ENCODE measurements at regions of chr3 and their contacts with region 1.

Region 1: DNA sequence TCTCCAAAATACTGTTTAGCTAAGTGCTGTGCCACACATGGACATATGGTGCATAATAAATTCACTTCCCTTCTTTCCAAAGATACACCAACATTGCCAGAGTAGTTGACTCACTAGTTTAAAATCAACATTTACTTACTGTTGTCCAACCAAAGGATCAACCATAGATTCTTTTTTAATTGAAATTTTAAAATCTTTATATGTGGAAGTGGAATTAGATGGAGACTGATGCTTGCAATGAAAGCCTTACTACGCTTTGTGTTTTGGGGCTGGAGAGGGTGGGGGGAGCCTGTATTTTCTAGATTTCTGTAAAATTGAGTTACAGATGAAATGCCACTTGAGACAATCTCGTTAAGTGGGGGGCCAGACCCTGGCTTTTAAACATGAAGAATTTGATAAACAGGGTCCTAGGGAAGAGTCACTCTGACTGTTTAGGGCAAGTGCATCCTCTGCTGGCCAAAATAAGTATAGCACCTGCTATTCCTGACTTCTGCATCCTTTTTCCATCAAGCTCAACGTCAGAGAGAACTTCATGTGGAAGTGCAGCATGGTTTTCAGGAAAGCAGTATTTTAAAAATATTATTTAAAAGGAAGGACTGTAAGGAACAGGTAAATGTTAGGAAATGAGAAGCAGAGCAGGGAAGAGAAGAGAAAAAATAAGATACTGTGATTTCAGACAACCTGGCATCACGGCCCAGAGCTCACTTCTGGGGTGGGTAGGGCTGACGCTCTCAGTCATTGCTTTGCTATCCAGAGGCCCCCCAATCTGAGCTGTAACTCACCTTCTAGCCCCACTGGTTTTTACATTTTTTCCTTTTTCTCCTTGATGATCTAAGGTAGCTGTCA is 76.7 kb downstream of the BOC start:
- DNase-seq: no peak
- H3K4me3 ChIP-seq: no peak overlapping the region
- H3K27ac ChIP-seq: peak overlapping the region; percentile 47
- H3K4me1 ChIP-seq: peaks cover 12% of the 10 kb centered on the region
- H3K27me3 ChIP-seq: no peaks in the 10 kb centered on the region
- CTCF ChIP-seq: peak; percentile 95 to 99 (median 95)
- POLR2A ChIP-seq: no peak

Region 2: GRCh38 chr3:113051302-113051711 is 236.7 kb before region 1 on chr3:
- intact Hi-C with region 1: loop called (anchors 5 kb)
- DNase-seq: peak in 1 of 2 donors; percentile 92
- H3K4me3 ChIP-seq: no peak overlapping the region
- H3K27ac ChIP-seq: peak overlapping the region; percentile 14
- H3K4me1 ChIP-seq: peaks cover 16% of the 10 kb centered on the region
- H3K27me3 ChIP-seq: no peaks in the 10 kb centered on the region
- CTCF ChIP-seq: peak; percentile 82 to 99 (median 98)
- POLR2A ChIP-seq: no peak

Region 3: DNA sequence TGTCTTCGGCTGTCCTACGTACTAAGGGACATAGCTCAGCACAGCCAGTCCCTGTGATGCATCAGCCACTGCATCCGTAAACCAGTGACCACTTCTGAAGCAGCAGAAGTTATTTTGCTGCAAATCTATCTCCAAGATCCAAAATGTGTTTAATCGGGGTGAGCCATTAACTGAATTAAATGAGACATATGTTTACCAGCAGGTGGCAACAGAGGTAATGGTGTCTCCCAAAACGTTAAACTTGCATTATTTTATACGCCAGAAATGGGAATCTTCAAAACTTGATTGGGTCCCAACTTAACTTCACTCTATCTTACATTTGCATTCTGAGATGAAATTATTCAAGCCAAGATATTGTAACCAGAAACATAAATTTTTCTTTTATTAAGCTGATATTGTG is 152.0 kb before region 1 on chr3:
- intact Hi-C with region 1: loop called (anchors 10 kb)
- DNase-seq: no peak
- H3K4me3 ChIP-seq: no peak overlapping the region
- H3K27ac ChIP-seq: no peak overlapping the region
- H3K4me1 ChIP-seq: peaks cover 12% of the 10 kb centered on the region
- H3K27me3 ChIP-seq: no peaks in the 10 kb centered on the region
- CTCF ChIP-seq: peak; percentile 20 to 73 (median 42)
- POLR2A ChIP-seq: no peak